Astrocyte of the cerebellum (primary cell): ENCODE measurements at regions of chr9 and their contacts with region 1.

Region 1: GRCh38 chr9:77909306-77909705 is 122.3 kb downstream of the GNAQ start:
- DNase-seq: no peak
- H3K4me3 ChIP-seq: no peak overlapping the region
- CTCF ChIP-seq: no peak

Region 2: DNA sequence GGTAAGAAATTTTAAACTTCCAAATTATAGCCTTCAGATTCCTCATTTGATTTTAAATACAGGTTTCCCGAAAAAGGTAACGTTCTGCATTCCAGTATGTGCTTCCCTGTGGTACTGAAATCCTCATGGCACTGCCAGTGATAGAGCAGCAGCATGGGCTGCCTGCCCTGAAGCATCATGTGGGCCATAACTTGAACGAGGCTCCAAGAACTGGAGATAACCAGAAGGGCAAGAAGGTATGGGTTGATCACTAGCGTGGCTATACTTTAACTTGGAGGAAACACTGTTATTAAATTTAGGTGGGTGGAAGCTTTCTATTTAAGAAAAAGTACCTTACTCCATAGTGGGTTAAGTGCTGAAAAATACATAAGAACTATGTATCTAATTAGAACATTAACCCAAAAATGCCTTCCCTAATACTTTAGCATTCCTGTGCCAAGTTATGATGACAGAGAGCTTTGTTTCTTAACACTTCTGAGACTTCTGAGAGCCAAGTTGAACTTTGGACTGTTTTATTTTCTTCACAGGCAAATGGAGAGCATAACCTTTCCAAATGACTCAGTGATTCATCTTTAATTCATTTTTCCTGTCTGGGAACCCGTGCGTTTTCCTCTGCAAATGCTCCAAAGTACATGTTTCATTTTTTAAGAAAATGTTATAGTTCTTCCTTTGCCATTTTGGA is 69.7 kb before region 1 on chr9:
- in situ Hi-C with region 1: loop called (anchors 5 kb)
- DNase-seq: peak; percentile 57
- H3K4me3 ChIP-seq: no peak overlapping the region
- CTCF ChIP-seq: no peak